Common myeloid progenitor, CD34-positive (primary cell): ENCODE measurements at regions of chr14 and their contacts with region 1.

Region 1: GRCh38 chr14:35416108-35416750 is 11.7 kb upstream of the NFKBIA start:
- DNase-seq: peak in 2 of 3 donors; percentile 25 to 31
- H3K4me3 ChIP-seq: peak overlapping the region in 4 of 7 experiments; percentile 2 to 41 (median 20)
- H3K27ac ChIP-seq: peak overlapping the region in 1 of 2 experiments; percentile 49
- H3K4me1 ChIP-seq: peaks cover 0 to 22% (median 18%) of the 10 kb centered on the region in 4 experiments
- H3K27me3 ChIP-seq: no peaks in the 10 kb centered on the region

Region 2: GRCh38 chr14:35215110-35215876 is 200.9 kb before region 1 on chr14:
- CTCF ChIA-PET with region 1: interaction called, 13 read pairs
- POLR2A ChIA-PET with region 1: interaction called, 3 read pairs
- DNase-seq: peak; percentile 34 to 62 (median 58)
- H3K4me3 ChIP-seq: no peak overlapping the region
- H3K27ac ChIP-seq: no peak overlapping the region
- H3K4me1 ChIP-seq: peaks cover 0 to 2% (median 0%) of the 10 kb centered on the region in 4 experiments
- H3K27me3 ChIP-seq: no peaks in the 10 kb centered on the region